ENCODE measurements at regions of chrX and their contacts with region 1.

Region 1: GRCh38 chrX:36445566-36445965 is 526.0 kb downstream of the CFAP47 start:
- DNase-seq: no peak
- ATAC-seq: no peak
- H3K4me3 ChIP-seq: no peak overlapping the region
- H3K27ac ChIP-seq: no peak overlapping the region
- H3K4me1 ChIP-seq: no peaks in the 10 kb centered on the region
- H3K27me3 ChIP-seq: no peaks in the 10 kb centered on the region
- CTCF ChIP-seq: no peak
- POLR2A ChIP-seq: no peak

Region 2: GRCh38 chrX:36266155-36266554 is 179.4 kb before region 1 on chrX:
- intact Hi-C with region 1: no loop called
- DNase-seq: no peak
- ATAC-seq: no peak
- H3K4me3 ChIP-seq: no peak overlapping the region
- H3K27ac ChIP-seq: no peak overlapping the region
- H3K4me1 ChIP-seq: no peaks in the 10 kb centered on the region
- H3K27me3 ChIP-seq: peaks cover 0 to 4% (median 0%) of the 10 kb centered on the region in 9 donors
- CTCF ChIP-seq: no peak
- POLR2A ChIP-seq: no peak

Region 3: GRCh38 chrX:36407836-36408235 is 37.7 kb before region 1 on chrX:
- intact Hi-C with region 1: loop called in 1 of 10 experiments (anchors 2 kb)
- DNase-seq: no peak
- ATAC-seq: no peak
- H3K4me3 ChIP-seq: no peak overlapping the region
- H3K27ac ChIP-seq: no peak overlapping the region
- H3K4me1 ChIP-seq: no peaks in the 10 kb centered on the region
- H3K27me3 ChIP-seq: no peaks in the 10 kb centered on the region
- CTCF ChIP-seq: no peak
- POLR2A ChIP-seq: no peak

Region 4: DNA sequence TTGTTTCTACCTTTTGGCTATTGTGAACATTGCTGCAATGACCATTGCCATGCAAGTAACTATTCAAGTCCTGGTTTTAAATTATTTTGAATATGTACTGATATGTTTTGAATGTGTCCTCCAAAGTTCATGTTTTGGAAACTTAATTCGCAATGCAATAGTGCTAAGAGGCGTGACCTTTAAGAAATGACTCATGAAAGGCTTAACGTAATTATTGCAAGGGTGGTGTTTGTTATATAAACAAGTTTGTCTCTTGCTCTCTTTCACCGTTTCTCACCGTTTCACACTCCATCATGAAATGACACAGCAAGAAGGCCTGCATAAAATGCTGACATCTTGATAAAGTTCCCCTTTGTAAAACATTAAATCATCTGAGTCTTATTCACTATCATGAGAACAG is 55.6 kb after region 1 on chrX:
- intact Hi-C with region 1: no loop called
- DNase-seq: no peak
- ATAC-seq: no peak
- H3K4me3 ChIP-seq: no peak overlapping the region
- H3K27ac ChIP-seq: no peak overlapping the region
- H3K4me1 ChIP-seq: no peaks in the 10 kb centered on the region
- H3K27me3 ChIP-seq: no peaks in the 10 kb centered on the region
- CTCF ChIP-seq: no peak
- POLR2A ChIP-seq: no peak

Measured in heart left ventricle (tissue), 16 donors.